Vagina (tissue), 2 donors: ENCODE measurements at regions of chr9 and their contacts with region 1.

Region 1: GRCh38 chr9:93305497-93306020 is 121.6 kb downstream of the WNK2 start:
- DNase-seq: peak; percentile 49 to 71
- H3K4me3 ChIP-seq: no peak overlapping the region
- H3K27ac ChIP-seq: no peak overlapping the region
- H3K4me1 ChIP-seq: no peaks in the 10 kb centered on the region
- H3K27me3 ChIP-seq: no peaks in the 10 kb centered on the region
- CTCF ChIP-seq: no peak
- POLR2A ChIP-seq: no peak

Region 2: DNA sequence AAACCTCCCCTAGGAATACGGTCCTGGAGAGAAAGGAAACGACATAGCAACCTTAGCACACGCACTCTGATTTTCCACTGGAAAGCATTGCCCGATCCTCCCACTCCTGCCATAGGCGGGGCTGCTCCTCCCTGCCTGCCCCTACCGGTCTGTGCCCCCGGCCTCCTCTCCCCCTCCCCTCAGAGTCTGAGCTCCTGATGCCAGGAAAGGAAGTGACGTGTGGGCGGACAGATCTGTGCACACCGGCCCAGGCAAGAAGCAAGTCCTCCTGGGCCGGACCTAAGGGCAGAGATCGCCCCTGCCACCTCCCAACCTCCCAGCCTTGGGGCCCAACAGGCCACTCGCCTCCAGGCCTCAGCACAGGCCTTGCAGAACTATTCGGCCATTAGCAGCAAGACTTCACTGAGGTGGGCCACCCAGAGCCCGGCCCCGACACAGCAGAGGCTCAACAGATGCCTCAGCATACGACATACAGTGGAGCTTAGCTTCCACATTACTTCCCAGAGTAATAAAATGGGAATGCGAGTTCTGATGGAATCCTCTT is 178.7 kb before region 1 on chr9:
- intact Hi-C with region 1: no loop called
- DNase-seq: no peak
- H3K4me3 ChIP-seq: peak overlapping the region in 1 of 2 donors; percentile 21
- H3K27ac ChIP-seq: peak overlapping the region; percentile 99
- H3K4me1 ChIP-seq: peaks cover 65% of the 10 kb centered on the region
- H3K27me3 ChIP-seq: no peaks in the 10 kb centered on the region
- CTCF ChIP-seq: no peak
- POLR2A ChIP-seq: no peak

Region 3: GRCh38 chr9:93159601-93160471 is 145.7 kb before region 1 on chr9:
- intact Hi-C with region 1: loop called (anchors 2 kb)
- DNase-seq: no peak
- H3K4me3 ChIP-seq: no peak overlapping the region
- H3K27ac ChIP-seq: no peak overlapping the region
- H3K4me1 ChIP-seq: peaks cover 6% of the 10 kb centered on the region
- H3K27me3 ChIP-seq: no peaks in the 10 kb centered on the region
- CTCF ChIP-seq: peak; percentile 91 to 97 (median 95)
- POLR2A ChIP-seq: no peak

Region 4: GRCh38 chr9:93223260-93224180 is 82.0 kb before region 1 on chr9:
- intact Hi-C with region 1: no loop called
- DNase-seq: no peak
- H3K4me3 ChIP-seq: no peak overlapping the region
- H3K27ac ChIP-seq: no peak overlapping the region
- H3K4me1 ChIP-seq: peaks cover 23% of the 10 kb centered on the region
- H3K27me3 ChIP-seq: no peaks in the 10 kb centered on the region
- CTCF ChIP-seq: no peak
- POLR2A ChIP-seq: no peak

Region 5: DNA sequence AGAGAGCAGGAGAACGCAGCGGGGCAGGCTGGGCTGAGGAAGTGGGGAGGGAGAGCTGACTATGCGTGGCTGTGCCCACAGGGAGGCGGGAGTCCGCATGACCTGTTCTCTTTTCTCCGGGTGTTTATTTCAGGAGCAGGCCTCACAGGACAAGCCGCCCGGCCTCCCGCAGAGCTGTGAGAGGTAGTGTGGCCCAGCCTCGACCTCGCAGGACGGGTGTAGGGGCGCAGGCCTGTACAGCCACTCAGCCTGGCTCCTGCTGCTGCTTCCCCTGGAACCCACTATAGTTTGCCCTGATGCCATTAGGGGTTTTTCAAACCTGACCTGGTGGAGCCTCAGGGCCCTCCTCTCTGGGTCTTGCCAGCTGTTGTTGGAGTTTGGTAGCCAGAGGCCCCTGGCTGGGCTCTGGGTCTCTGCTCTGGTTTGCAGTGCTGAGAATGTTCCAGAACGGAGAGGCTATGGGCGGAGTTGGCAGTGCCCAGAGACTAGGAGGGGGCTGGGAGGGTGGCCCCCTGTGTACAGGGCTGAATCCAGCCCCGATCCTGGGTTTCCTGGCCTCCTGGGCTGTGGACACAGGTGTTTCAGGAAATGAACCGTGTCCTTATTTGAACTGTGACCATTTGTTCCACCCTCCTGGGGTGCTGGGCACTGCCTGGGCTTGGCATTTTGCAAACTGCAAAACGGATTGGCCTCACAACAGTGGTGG is 42.9 kb before region 1 on chr9:
- intact Hi-C with region 1: loop called (anchors 2 kb)
- DNase-seq: peak in 1 of 2 donors; percentile 62
- H3K4me3 ChIP-seq: no peak overlapping the region
- H3K27ac ChIP-seq: no peak overlapping the region
- H3K4me1 ChIP-seq: no peaks in the 10 kb centered on the region
- H3K27me3 ChIP-seq: no peaks in the 10 kb centered on the region
- CTCF ChIP-seq: no peak
- POLR2A ChIP-seq: no peak